ENCODE measurements at regions of chr6 and their contacts with region 1.

Region 1: DNA sequence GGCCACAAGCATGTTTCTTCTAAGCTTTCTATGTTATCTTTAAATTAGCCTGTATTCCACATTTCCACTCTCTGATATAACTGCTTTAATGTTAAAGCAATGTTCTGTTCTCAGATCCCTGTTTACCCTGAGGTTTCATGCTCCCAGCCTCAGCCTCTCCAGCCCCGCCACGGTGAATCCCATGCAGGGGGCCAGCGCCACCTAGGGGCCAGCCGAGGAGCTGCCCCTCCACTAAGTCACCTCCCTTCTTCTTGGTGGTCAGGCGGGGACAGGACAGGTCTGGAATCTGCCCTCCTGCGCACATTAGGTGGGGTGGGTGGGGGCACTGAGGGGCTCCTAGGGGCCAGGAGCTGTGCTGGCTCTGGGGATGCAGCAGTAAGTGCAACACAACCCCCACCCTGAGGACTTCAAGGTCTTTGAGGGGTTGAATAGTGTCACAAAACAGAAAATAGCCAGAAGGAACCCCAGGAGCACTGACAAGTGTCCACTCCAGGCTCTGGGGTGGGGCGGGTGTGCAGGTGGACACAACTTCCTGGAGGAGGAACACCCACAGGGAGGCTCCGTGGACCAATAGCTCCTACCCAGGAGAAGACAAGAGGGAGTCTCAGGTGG is 61.6 kb downstream of the RAB44 start:
- DNase-seq: no peak
- H3K4me3 ChIP-seq: no peak overlapping the region
- CTCF ChIP-seq: peak; percentile 99

Region 2: GRCh38 chr6:36224904-36225461 is 534.3 kb before region 1 on chr6:
- CTCF ChIA-PET with region 1: no interaction called
- POLR2A ChIA-PET with region 1: no interaction called
- DNase-seq: no peak
- H3K4me3 ChIP-seq: no peak overlapping the region
- CTCF ChIP-seq: no peak

Region 3: DNA sequence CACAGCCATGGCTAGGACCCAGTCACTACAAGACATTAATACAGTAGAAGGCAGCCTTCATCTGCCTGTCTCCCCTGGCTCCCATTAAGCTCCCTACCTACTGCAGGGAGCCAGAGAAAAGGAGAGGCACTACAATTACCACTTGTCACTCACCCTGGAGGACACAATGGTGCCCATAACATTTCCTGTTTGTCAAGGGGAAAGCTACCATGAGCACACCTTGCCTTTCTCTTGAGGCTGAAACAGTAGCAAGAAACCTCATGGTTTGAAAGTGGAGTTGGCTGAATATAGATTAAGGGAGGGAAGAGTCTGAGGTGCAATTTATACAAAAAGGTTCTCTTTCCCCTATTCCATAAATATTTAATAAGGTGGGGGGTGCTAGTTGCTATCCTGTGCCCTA is 239.9 kb before region 1 on chr6:
- CTCF ChIA-PET with region 1: no interaction called
- POLR2A ChIA-PET with region 1: no interaction called
- DNase-seq: no peak
- H3K4me3 ChIP-seq: no peak overlapping the region
- CTCF ChIP-seq: no peak

Region 4: GRCh38 chr6:36615018-36615761 is 144.1 kb before region 1 on chr6:
- CTCF ChIA-PET with region 1: interaction called, 167 read pairs
- POLR2A ChIA-PET with region 1: interaction called, 6 read pairs
- DNase-seq: no peak
- H3K4me3 ChIP-seq: no peak overlapping the region
- CTCF ChIP-seq: peak; percentile 61

Region 5: GRCh38 chr6:36650848-36651478 is 108.3 kb before region 1 on chr6:
- CTCF ChIA-PET with region 1: interaction called, 11 read pairs
- POLR2A ChIA-PET with region 1: no interaction called
- DNase-seq: no peak
- H3K4me3 ChIP-seq: no peak overlapping the region
- CTCF ChIP-seq: no peak

Region 6: DNA sequence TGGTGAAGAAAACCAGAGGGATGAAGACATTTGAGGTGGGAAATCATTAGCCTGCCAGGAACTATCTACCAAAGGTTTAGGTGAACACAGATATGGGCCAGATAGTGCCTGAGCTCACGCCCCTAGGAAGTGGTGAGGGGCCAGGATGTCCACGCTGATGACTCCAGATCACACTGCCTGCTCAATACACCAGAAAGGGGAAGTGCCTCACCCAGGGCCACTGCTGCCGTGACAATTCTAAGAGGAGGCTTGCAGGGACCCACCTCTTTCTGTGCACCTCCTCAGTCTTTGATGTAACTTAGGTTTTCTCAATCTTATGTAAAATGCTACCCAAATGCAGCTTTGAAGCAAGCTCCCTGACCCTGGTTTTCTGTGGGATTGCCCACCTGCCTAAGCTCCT is 67.0 kb before region 1 on chr6:
- CTCF ChIA-PET with region 1: interaction called, 14 read pairs
- POLR2A ChIA-PET with region 1: interaction called, 7 read pairs
- DNase-seq: no peak
- H3K4me3 ChIP-seq: no peak overlapping the region
- CTCF ChIP-seq: no peak

Region 7: GRCh38 chr6:36735110-36736071 is 23.9 kb before region 1 on chr6:
- CTCF ChIA-PET with region 1: interaction called, 35 read pairs
- POLR2A ChIA-PET with region 1: no interaction called
- DNase-seq: peak; percentile 91
- H3K4me3 ChIP-seq: peak overlapping the region; percentile 42
- CTCF ChIP-seq: peak; percentile 23

Measured in AG04449 (cell line).